Endothelial cell of umbilical vein (primary cell): ENCODE measurements at regions of chr7 and their contacts with region 1.

Region 1: GRCh38 chr7:94449148-94449725 is 54.5 kb downstream of the COL1A2 start:
- DNase-seq: peak; percentile 51
- H3K4me3 ChIP-seq: no peak overlapping the region
- H3K27ac ChIP-seq: no peak overlapping the region
- H3K4me1 ChIP-seq: peaks cover 3% of the 10 kb centered on the region
- H3K27me3 ChIP-seq: no peaks in the 10 kb centered on the region
- CTCF ChIP-seq: peak; percentile 27 to 38
- POLR2A ChIP-seq: no peak

Region 2: DNA sequence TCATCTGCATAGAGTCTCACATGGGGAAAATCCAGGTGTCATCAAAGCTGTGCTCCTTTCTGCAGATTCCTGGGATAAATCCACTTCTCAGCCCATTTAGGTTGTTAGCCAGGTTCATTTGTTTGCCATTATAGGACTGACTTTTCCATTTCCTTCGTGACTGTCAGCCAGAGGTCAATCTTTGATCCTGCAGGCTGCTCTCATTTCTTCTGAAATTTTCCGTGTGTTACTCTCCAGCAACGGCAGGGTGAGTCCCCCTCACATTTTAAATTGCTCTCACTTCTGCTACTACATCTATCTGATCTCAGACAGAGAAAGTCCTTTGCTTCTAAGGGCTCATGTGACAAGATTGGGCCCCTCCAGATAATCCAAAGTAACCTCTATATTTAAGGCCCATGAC is 294.4 kb before region 1 on chr7:
- CTCF ChIA-PET with region 1: no interaction called
- POLR2A ChIA-PET with region 1: no interaction called
- dilution Hi-C with region 1: no loop called
- intact Hi-C with region 1: no loop called
- DNase-seq: no peak
- H3K4me3 ChIP-seq: no peak overlapping the region
- H3K27ac ChIP-seq: no peak overlapping the region
- H3K4me1 ChIP-seq: peaks cover 25% of the 10 kb centered on the region
- H3K27me3 ChIP-seq: no peaks in the 10 kb centered on the region
- CTCF ChIP-seq: no peak
- POLR2A ChIP-seq: no peak

Region 3: DNA sequence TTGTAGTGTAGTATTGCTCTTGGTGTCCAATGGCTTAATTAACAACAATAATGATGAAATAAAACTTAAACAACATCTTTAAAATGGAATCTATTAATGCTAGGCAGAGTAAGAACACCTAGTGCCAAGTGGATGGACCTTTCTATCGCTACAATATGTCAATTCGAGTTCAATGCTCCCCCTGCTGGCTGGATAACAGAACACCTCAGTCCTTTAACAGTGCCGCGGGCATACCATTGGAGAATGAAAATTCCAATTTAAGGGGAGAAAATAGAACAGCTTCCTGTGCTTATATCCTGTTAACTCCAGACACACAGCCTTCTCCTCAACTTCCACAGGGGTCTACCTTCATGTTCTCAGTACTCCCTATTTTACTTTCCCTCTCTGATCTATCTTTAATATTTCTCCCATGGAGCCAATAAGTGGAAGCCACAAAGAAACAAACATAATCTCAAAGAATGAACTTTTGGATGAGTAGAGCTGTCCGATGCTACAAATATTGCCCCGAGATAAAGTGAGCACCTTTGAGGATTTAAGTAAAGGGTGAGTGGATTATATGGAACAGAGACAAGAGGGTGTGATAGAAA is 13.1 kb before region 1 on chr7:
- CTCF ChIA-PET with region 1: interaction called, 24 read pairs
- POLR2A ChIA-PET with region 1: no interaction called
- dilution Hi-C with region 1: no loop called
- intact Hi-C with region 1: no loop called
- DNase-seq: peak; percentile 69
- H3K4me3 ChIP-seq: no peak overlapping the region
- H3K27ac ChIP-seq: no peak overlapping the region
- H3K4me1 ChIP-seq: no peaks in the 10 kb centered on the region
- H3K27me3 ChIP-seq: peaks cover 0 to 4% of the 10 kb centered on the region in 2 experiments
- CTCF ChIP-seq: peak; percentile 73 to 83
- POLR2A ChIP-seq: no peak

Region 4: GRCh38 chr7:94657771-94658693 is 208.8 kb after region 1 on chr7:
- CTCF ChIA-PET with region 1: interaction called, 76 read pairs
- POLR2A ChIA-PET with region 1: no interaction called
- dilution Hi-C with region 1: no loop called
- intact Hi-C with region 1: loop called (anchors 1 kb)
- DNase-seq: peak; percentile 95
- H3K4me3 ChIP-seq: peak overlapping the region in 2 of 3 experiments; percentile 38 to 41
- H3K27ac ChIP-seq: peak overlapping the region; percentile 47
- H3K4me1 ChIP-seq: peaks cover 20% of the 10 kb centered on the region
- H3K27me3 ChIP-seq: no peaks in the 10 kb centered on the region
- CTCF ChIP-seq: no peak
- POLR2A ChIP-seq: no peak

Region 5: DNA sequence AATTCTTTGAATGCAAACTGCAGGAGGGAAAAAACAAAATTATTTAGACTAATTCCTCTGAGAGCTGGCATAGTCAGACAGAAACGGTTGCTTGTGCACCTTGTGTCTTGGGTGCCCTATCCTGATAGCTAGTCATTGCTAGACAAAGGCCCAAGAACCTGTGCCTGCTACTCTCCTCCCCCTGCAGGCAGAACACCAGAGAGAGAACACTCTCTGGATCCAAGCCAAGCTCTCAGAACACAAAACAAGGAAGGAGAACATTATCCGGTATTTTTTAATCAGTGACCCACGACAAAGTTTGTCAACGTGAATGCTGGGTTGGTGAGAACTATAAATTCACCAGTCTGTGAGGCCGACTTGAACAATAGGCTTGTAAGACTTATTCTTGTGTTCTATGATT is 439.3 kb after region 1 on chr7:
- CTCF ChIA-PET with region 1: interaction called, 12 read pairs
- POLR2A ChIA-PET with region 1: no interaction called
- dilution Hi-C with region 1: no loop called
- intact Hi-C with region 1: loop called (anchors 10 kb)
- DNase-seq: peak; percentile 85
- H3K4me3 ChIP-seq: no peak overlapping the region
- H3K27ac ChIP-seq: no peak overlapping the region
- H3K4me1 ChIP-seq: peaks cover 3% of the 10 kb centered on the region
- H3K27me3 ChIP-seq: no peaks in the 10 kb centered on the region
- CTCF ChIP-seq: peak; percentile 10 to 44
- POLR2A ChIP-seq: no peak

Region 6: GRCh38 chr7:95199779-95200558 is 750.7 kb after region 1 on chr7:
- CTCF ChIA-PET with region 1: interaction called, 118 read pairs
- POLR2A ChIA-PET with region 1: no interaction called
- dilution Hi-C with region 1: no loop called
- intact Hi-C with region 1: loop called (anchors 1 kb)
- DNase-seq: peak; percentile 41
- H3K4me3 ChIP-seq: no peak overlapping the region
- H3K27ac ChIP-seq: no peak overlapping the region
- H3K4me1 ChIP-seq: no peaks in the 10 kb centered on the region
- H3K27me3 ChIP-seq: no peaks in the 10 kb centered on the region
- CTCF ChIP-seq: peak; percentile 49 to 65
- POLR2A ChIP-seq: no peak

Region 7: DNA sequence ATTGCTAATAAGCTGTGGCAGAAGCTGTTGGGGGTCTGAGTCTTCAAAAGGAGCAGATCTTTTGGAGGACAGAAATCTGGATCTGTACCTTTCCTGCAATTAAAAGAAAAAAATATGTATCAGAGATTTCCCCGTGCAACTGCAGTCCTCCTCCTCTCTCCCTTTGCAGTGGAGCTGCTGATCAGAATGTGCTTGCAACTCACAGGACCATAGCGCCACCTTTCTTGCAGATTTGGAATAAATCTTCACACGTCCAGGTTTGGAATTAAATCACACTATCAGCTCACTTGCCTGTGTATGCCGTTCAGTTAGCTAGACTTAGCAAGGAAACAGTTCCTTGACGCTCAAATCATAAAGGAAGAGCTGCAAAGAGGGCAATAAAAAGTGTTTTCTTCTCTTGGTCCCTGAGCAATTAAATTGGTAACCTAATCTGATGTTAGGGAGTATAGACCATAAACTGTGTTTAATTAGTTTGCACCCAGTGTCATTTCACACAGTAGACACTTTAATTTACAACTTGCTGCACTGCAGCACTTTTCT is 797.7 kb after region 1 on chr7:
- CTCF ChIA-PET with region 1: interaction called, 116 read pairs
- POLR2A ChIA-PET with region 1: no interaction called
- dilution Hi-C with region 1: no loop called
- intact Hi-C with region 1: loop called (anchors 1 kb)
- DNase-seq: peak; percentile 71
- H3K4me3 ChIP-seq: no peak overlapping the region
- H3K27ac ChIP-seq: no peak overlapping the region
- H3K4me1 ChIP-seq: no peaks in the 10 kb centered on the region
- H3K27me3 ChIP-seq: no peaks in the 10 kb centered on the region
- CTCF ChIP-seq: peak; percentile 63 to 68
- POLR2A ChIP-seq: no peak

Region 8: DNA sequence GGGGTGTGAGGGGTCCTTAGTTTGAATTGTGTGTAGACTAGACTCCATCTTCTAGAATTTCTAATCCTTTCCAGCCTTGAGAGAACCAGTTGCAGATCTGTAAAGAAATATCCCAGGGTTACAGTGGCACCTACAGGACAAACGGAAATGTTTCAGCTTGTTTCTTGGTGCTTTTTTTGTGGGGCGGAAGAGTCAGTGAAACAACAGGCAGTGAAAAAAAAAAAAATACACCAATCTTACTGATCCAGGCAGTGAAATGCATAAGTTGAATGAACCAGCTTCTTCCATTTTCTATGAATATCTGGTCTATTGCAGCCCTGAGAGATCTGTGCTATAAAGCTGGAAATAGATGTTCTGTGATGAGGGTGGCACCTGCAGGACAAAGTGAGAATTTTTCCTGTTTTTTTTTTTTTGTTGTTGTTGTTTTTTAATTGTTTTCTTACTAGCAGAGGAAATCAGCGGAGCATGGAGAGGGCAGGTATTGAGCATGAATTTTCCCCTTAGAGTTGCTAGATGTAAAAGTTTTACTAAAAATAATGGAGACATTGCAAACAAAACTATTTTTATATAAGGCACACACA is 1241.2 kb after region 1 on chr7:
- CTCF ChIA-PET with region 1: interaction called, 15 read pairs
- POLR2A ChIA-PET with region 1: no interaction called
- dilution Hi-C with region 1: no loop called
- intact Hi-C with region 1: no loop called
- DNase-seq: peak; percentile 59
- H3K4me3 ChIP-seq: no peak overlapping the region
- H3K27ac ChIP-seq: no peak overlapping the region
- H3K4me1 ChIP-seq: no peaks in the 10 kb centered on the region
- H3K27me3 ChIP-seq: peaks cover 0 to 5% of the 10 kb centered on the region in 2 experiments
- CTCF ChIP-seq: peak; percentile 37 to 42
- POLR2A ChIP-seq: no peak